MCF 10A (cell line): ENCODE measurements at regions of chr1 and their contacts with region 1.

Region 1: DNA sequence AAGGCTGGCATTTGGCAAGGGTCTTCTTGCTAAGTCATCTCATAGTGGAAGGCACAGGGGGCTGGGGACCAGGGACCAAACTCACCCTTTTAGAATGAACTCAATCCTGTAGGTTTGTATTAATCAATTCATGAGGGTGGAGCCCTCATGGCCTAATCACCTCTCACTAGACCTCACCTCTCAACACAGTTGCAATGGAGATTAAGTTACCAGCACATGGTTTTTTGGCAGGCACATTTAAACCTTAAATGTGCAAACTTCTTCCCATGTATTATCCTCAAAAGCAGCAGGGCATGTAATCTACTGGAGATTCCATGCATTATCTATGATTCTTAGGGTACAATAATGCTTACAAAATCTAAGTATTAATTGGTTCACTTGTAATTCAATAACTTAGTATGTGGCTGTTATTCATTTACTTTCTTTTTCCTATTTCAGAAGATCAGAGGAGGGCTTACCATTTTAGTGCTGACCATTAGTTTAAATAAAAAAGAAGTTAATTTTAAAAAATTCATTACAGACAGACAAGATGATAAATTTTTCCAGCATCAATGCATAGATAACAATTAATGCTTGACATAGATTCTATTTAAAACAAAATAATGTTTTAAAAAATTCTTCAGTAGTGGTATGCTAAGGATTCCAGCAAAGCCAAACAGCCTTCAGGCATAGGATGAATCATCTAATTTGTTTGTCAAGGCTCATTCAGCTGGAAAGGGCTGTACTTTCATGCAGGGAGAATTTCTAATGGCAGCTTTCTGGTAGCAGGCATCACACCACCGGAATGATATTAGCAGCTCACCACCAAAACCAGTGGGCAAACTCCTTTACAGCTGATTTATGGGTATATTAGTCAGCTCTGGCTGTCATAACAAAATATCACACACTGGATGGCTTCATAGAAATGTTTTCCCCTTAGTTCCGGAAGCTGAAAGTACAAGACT is 124.6 kb upstream of the ZNF648 start:
- DNase-seq: peak; percentile 91
- H3K4me3 Mint-ChIP-seq: peak overlapping the region; percentile 10
- H3K27ac Mint-ChIP-seq: peak overlapping the region; percentile 81
- H3K4me1 Mint-ChIP-seq: peaks cover 58% of the 10 kb centered on the region
- H3K27me3 Mint-ChIP-seq: no peaks in the 10 kb centered on the region
- CTCF ChIP-seq: no peak

Region 2: GRCh38 chr1:182206626-182207239 is 20.6 kb after region 1 on chr1:
- CTCF ChIA-PET with region 1: interaction called, 6 read pairs
- POLR2A ChIA-PET with region 1: interaction called, 10 read pairs
- intact Hi-C with region 1: no loop called
- DNase-seq: no peak
- H3K4me3 Mint-ChIP-seq: no peak overlapping the region
- H3K27ac Mint-ChIP-seq: no peak overlapping the region
- H3K4me1 Mint-ChIP-seq: peaks cover 5% of the 10 kb centered on the region
- H3K27me3 Mint-ChIP-seq: no peaks in the 10 kb centered on the region
- CTCF ChIP-seq: no peak

Region 3: DNA sequence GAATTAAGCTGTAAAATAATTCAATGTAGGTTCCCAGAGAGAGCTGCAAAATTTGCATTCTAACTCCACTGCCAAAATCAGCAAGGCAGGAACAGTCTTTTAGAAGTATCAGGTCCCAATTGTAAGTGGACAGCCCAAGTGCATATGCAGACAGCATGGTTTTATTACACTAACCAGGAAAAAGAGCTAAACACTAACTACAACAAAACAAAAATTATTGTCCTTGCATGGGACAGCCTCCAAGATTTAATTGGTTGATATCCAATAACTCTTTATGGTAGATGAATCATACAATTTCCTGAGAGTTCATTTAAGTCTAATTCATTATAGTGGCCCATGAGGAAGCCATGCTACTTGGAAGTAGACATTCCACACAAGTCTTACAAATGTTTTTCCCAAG is 29.7 kb after region 1 on chr1:
- CTCF ChIA-PET with region 1: no interaction called
- POLR2A ChIA-PET with region 1: interaction called, 34 read pairs
- intact Hi-C with region 1: no loop called
- DNase-seq: peak; percentile 28
- H3K4me3 Mint-ChIP-seq: no peak overlapping the region
- H3K27ac Mint-ChIP-seq: peak overlapping the region; percentile 7
- H3K4me1 Mint-ChIP-seq: peaks cover 32% of the 10 kb centered on the region
- H3K27me3 Mint-ChIP-seq: no peaks in the 10 kb centered on the region
- CTCF ChIP-seq: no peak

Region 4: GRCh38 chr1:182235952-182236650 is 50.0 kb after region 1 on chr1:
- CTCF ChIA-PET with region 1: no interaction called
- POLR2A ChIA-PET with region 1: no interaction called
- intact Hi-C with region 1: no loop called
- DNase-seq: no peak
- H3K4me3 Mint-ChIP-seq: no peak overlapping the region
- H3K27ac Mint-ChIP-seq: no peak overlapping the region
- H3K4me1 Mint-ChIP-seq: peaks cover 17% of the 10 kb centered on the region
- H3K27me3 Mint-ChIP-seq: no peaks in the 10 kb centered on the region
- CTCF ChIP-seq: no peak

Region 5: DNA sequence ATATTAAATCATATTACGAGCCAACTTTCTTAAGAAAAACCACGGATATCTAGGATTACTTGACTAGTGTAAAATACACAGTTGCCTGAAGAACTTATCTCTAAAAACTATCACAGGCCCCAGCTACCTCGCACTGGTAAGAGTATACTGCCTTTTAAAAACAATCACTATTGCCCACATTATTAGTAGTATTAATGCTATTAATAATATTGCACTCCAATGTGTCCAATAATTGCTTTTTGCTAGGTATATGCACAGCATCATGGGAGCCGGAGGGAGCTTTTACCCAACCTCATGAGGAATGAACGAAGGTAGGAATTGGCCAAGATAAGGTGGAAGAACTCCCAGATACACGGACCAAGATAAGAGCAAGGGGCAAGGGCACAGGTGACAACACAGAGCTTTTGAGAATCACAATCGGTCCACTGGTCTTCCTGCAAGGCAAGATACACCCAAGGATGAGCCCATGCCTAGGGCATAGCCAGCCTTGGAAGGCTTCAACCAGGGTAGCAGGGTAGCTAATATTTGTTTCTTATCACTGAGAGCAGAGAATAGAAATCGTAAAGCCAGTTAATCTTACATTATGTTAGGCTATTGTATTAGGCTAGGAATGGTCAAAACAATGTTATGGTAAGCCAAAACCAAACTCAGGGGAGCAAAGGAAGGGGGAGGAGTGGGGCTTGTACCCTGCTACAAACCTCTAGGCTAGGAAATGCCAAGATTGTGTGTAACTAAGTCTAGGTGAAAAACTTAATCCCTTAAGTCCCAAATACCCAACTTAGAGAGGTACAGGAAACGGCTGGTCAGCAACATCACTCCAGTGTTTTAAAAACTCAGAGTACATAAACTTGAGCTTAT is 196.1 kb after region 1 on chr1:
- CTCF ChIA-PET with region 1: no interaction called
- POLR2A ChIA-PET with region 1: interaction called, 14 read pairs
- intact Hi-C with region 1: no loop called
- DNase-seq: no peak
- H3K4me3 Mint-ChIP-seq: no peak overlapping the region
- H3K27ac Mint-ChIP-seq: peak overlapping the region; percentile 78
- H3K4me1 Mint-ChIP-seq: peaks cover 39% of the 10 kb centered on the region
- H3K27me3 Mint-ChIP-seq: no peaks in the 10 kb centered on the region
- CTCF ChIP-seq: no peak

Region 6: GRCh38 chr1:182391362-182392044 is 205.4 kb after region 1 on chr1 and contains the start of gene GLUL:
- CTCF ChIA-PET with region 1: interaction called, 6 read pairs
- POLR2A ChIA-PET with region 1: interaction called, 24 read pairs
- intact Hi-C with region 1: loop called (anchors 1 kb)
- DNase-seq: peak; percentile 90
- H3K4me3 Mint-ChIP-seq: peak within 1 kb of the TSS; percentile 100
- H3K27ac Mint-ChIP-seq: peak within 1 kb of the TSS; percentile 100
- H3K4me1 Mint-ChIP-seq: peaks cover 27% of the 10 kb centered on the region
- H3K27me3 Mint-ChIP-seq: no peaks in the 10 kb centered on the region
- CTCF ChIP-seq: peak; percentile 2
- total RNA-seq, gene GLUL: 240 and 437 TPM in 2 replicates